CD4-positive, alpha-beta memory T cell (primary cell): ENCODE measurements at regions of chr16 and their contacts with region 1.

Region 1: GRCh38 chr16:50741808-50742575 is at the start of gene CYLD:
- DNase-seq: peak; percentile 99 to 100 (median 100)
- H3K4me3 ChIP-seq: peak within 1 kb of the TSS; percentile 72 to 80
- H3K4me3 Mint-ChIP-seq: peak within 1 kb of the TSS; percentile 95 to 99 (median 98)
- H3K27ac ChIP-seq: peak within 1 kb of the TSS; percentile 100
- H3K27ac Mint-ChIP-seq: peak within 1 kb of the TSS; percentile 95 to 99 (median 99)
- H3K4me1 ChIP-seq: peaks cover 38% of the 10 kb centered on the region
- H3K4me1 Mint-ChIP-seq: peaks cover 22 to 62% (median 35%) of the 10 kb centered on the region in 4 donors
- H3K27me3 ChIP-seq: no peaks in the 10 kb centered on the region
- H3K27me3 Mint-ChIP-seq: no peaks in the 10 kb centered on the region
- total RNA-seq, gene CYLD: 294 to 299 TPM

Region 2: GRCh38 chr16:50152807-50153452 is 589.1 kb before region 1 on chr16 and contains the start of gene TENT4B:
- CTCF ChIA-PET with region 1: no interaction called
- POLR2A ChIA-PET with region 1: interaction called, 3 read pairs
- intact Hi-C with region 1: loop called (anchors 2 kb)
- DNase-seq: peak; percentile 92 to 95 (median 94)
- H3K4me3 ChIP-seq: peak within 1 kb of the TSS; percentile 84 to 93
- H3K4me3 Mint-ChIP-seq: peak within 1 kb of the TSS; percentile 91 to 97 (median 94)
- H3K27ac ChIP-seq: peak within 1 kb of the TSS; percentile 89
- H3K27ac Mint-ChIP-seq: peak within 1 kb of the TSS; percentile 93 to 99 (median 97)
- H3K4me1 ChIP-seq: peaks cover 47% of the 10 kb centered on the region
- H3K4me1 Mint-ChIP-seq: peaks cover 25 to 41% (median 34%) of the 10 kb centered on the region in 4 donors
- H3K27me3 ChIP-seq: no peaks in the 10 kb centered on the region
- H3K27me3 Mint-ChIP-seq: no peaks in the 10 kb centered on the region
- total RNA-seq, gene TENT4B: 22.4 to 23.5 TPM

Region 3: GRCh38 chr16:50585331-50585776 is 156.6 kb before region 1 on chr16:
- CTCF ChIA-PET with region 1: no interaction called
- POLR2A ChIA-PET with region 1: no interaction called
- intact Hi-C with region 1: no loop called
- DNase-seq: no peak
- H3K4me3 ChIP-seq: no peak overlapping the region
- H3K4me3 Mint-ChIP-seq: no peak overlapping the region
- H3K27ac ChIP-seq: no peak overlapping the region
- H3K27ac Mint-ChIP-seq: peak overlapping the region in 1 of 7 donors; percentile 64
- H3K4me1 ChIP-seq: peaks cover 17% of the 10 kb centered on the region
- H3K4me1 Mint-ChIP-seq: peaks cover 19 to 27% (median 23%) of the 10 kb centered on the region in 4 donors
- H3K27me3 ChIP-seq: no peaks in the 10 kb centered on the region
- H3K27me3 Mint-ChIP-seq: no peaks in the 10 kb centered on the region

Region 4: GRCh38 chr16:50681021-50681885 is 60.7 kb before region 1 on chr16 and contains the start of gene SNX20:
- CTCF ChIA-PET with region 1: interaction called, 136 read pairs
- POLR2A ChIA-PET with region 1: interaction called, 478 read pairs
- intact Hi-C with region 1: loop called (anchors 1 kb)
- DNase-seq: peak; percentile 69 to 82 (median 76)
- H3K4me3 ChIP-seq: peak within 1 kb of the TSS; percentile 45 to 93
- H3K4me3 Mint-ChIP-seq: peak within 1 kb of the TSS; percentile 83 to 97 (median 94)
- H3K27ac ChIP-seq: peak within 1 kb of the TSS; percentile 90
- H3K27ac Mint-ChIP-seq: peak within 1 kb of the TSS; percentile 87 to 99 (median 97)
- H3K4me1 ChIP-seq: peaks cover 93% of the 10 kb centered on the region
- H3K4me1 Mint-ChIP-seq: peaks cover 69 to 95% (median 84%) of the 10 kb centered on the region in 4 donors
- H3K27me3 ChIP-seq: no peaks in the 10 kb centered on the region
- H3K27me3 Mint-ChIP-seq: no peaks in the 10 kb centered on the region
- total RNA-seq, gene SNX20: 88.9 to 90.1 TPM

Region 5: DNA sequence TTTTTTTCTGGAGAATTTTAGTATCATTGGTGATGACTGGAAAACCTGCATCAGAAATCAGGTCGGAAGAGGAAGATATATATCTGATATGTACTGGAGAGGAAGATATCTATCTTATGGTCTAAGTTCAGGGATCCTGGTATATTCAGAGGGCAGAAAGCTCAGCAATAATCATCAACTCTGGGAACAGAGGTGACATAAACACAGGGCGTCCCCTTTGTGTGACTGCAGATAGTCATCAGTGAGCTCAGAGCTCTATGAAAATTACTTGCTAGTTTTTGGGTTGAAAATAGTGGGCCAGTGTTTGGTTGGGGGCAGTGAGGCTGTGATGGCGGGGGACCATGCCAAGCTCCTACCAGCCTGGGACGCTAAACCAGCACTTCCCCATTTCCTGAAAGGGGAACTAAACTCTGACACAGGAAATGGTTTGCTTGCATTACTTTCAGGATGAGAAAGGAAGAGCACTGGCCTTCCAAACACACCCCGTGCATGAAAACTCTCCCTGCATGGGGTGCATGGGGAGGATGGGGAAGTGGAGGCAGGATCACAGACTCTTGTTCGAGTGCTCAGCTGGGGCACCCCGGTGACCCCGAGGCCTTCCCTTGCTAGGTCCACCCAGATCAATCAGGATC is 32.8 kb before region 1 on chr16:
- CTCF ChIA-PET with region 1: interaction called, 5 read pairs
- POLR2A ChIA-PET with region 1: interaction called, 20 read pairs
- intact Hi-C with region 1: no loop called
- DNase-seq: no peak
- H3K4me3 ChIP-seq: no peak overlapping the region
- H3K4me3 Mint-ChIP-seq: peak overlapping the region in 7 of 8 donors; percentile 35 to 66 (median 57)
- H3K27ac ChIP-seq: peak overlapping the region; percentile 32
- H3K27ac Mint-ChIP-seq: peak overlapping the region; percentile 71 to 92 (median 86)
- H3K4me1 ChIP-seq: peaks cover 26% of the 10 kb centered on the region
- H3K4me1 Mint-ChIP-seq: peaks cover 37 to 60% (median 48%) of the 10 kb centered on the region in 4 donors
- H3K27me3 ChIP-seq: no peaks in the 10 kb centered on the region
- H3K27me3 Mint-ChIP-seq: no peaks in the 10 kb centered on the region

Region 6: GRCh38 chr16:50731130-50731988 is 10.6 kb before region 1 on chr16:
- CTCF ChIA-PET with region 1: interaction called, 5 read pairs
- POLR2A ChIA-PET with region 1: interaction called, 23 read pairs
- intact Hi-C with region 1: no loop called
- DNase-seq: peak in 1 of 5 donors; percentile 19
- H3K4me3 ChIP-seq: no peak overlapping the region
- H3K4me3 Mint-ChIP-seq: peak overlapping the region in 5 of 8 donors; percentile 20 to 72 (median 51)
- H3K27ac ChIP-seq: peak overlapping the region; percentile 19
- H3K27ac Mint-ChIP-seq: peak overlapping the region; percentile 67 to 87 (median 83)
- H3K4me1 ChIP-seq: peaks cover 13% of the 10 kb centered on the region
- H3K4me1 Mint-ChIP-seq: peaks cover 10 to 22% (median 18%) of the 10 kb centered on the region in 4 donors
- H3K27me3 ChIP-seq: no peaks in the 10 kb centered on the region
- H3K27me3 Mint-ChIP-seq: no peaks in the 10 kb centered on the region